ENCODE measurements at regions of chr2 and their contacts with region 1.

Region 1: GRCh38 chr2:231713730-231714430 is 5.6 kb downstream of the PTMA start:
- DNase-seq: peak; percentile 80 to 92 (median 88)
- H3K4me3 ChIP-seq: no peak overlapping the region
- H3K27ac ChIP-seq: no peak overlapping the region
- H3K4me1 ChIP-seq: peaks cover 18% of the 10 kb centered on the region
- H3K27me3 ChIP-seq: no peaks in the 10 kb centered on the region
- CTCF ChIP-seq: peak; percentile 84 to 91 (median 90)
- EP300 ChIP-seq: no peak
- POLR2A ChIP-seq: no peak

Region 2: DNA sequence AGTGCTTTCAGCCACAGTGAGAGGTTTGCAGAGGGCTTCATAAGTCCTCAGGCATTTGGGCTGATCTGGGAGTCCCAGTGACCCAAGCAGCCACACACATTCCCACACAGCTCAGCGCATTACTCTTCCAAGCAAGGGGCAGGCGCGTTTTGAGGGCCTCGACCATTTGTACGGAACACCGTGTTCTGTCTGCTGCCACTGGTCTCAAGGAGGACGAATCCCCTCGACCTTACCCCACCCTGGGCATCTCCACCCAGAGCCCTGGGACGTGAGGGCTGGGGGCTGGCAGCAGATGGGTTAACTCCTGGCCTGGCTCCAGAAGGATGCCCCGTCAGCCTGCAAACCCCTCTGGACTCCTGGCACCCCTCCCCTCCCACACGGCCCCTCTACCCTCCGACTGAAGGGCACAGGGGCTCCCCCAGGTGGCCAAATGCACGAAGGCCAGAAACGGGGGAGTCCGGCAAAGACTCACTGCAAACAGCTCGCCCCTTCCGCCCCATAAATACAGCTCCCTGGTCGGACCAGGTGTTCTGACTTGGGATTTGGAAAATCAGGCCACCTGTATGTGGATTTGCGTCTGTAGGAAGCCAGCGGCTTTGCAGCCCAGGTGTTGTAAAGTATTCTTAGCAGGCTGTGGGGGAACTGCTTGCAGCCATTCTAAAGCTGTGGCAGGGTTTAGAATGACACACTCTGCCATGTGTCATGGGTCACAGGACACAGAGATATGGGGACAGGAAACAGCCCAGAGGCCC is 39.1 kb before region 1 on chr2:
- intact Hi-C with region 1: loop called (anchors 1 to 2 kb)
- DNase-seq: peak; percentile 65 to 83 (median 75)
- H3K4me3 ChIP-seq: no peak overlapping the region
- H3K27ac ChIP-seq: peak overlapping the region in 1 of 2 donors; percentile 36
- H3K4me1 ChIP-seq: peaks cover 3% of the 10 kb centered on the region
- H3K27me3 ChIP-seq: no peaks in the 10 kb centered on the region
- CTCF ChIP-seq: peak; percentile 60 to 91 (median 74)
- EP300 ChIP-seq: no peak
- POLR2A ChIP-seq: no peak

Region 3: GRCh38 chr2:232447638-232448303 is 733.9 kb after region 1 on chr2:
- intact Hi-C with region 1: no loop called
- DNase-seq: peak in 1 of 5 donors; percentile 22
- H3K4me3 ChIP-seq: no peak overlapping the region
- H3K27ac ChIP-seq: no peak overlapping the region
- H3K4me1 ChIP-seq: no peaks in the 10 kb centered on the region
- H3K27me3 ChIP-seq: no peaks in the 10 kb centered on the region
- CTCF ChIP-seq: no peak
- EP300 ChIP-seq: no peak
- POLR2A ChIP-seq: no peak